Activated CD8-positive, alpha-beta T cell treated with anti-CD3 and anti-CD28 coated beads, Interleukin-2, amount 10 ng/mL, durations not matched to agents 7 days and 5 days (primary cell): ENCODE measurements at regions of chr6 and their contacts with region 1.

Region 1: DNA sequence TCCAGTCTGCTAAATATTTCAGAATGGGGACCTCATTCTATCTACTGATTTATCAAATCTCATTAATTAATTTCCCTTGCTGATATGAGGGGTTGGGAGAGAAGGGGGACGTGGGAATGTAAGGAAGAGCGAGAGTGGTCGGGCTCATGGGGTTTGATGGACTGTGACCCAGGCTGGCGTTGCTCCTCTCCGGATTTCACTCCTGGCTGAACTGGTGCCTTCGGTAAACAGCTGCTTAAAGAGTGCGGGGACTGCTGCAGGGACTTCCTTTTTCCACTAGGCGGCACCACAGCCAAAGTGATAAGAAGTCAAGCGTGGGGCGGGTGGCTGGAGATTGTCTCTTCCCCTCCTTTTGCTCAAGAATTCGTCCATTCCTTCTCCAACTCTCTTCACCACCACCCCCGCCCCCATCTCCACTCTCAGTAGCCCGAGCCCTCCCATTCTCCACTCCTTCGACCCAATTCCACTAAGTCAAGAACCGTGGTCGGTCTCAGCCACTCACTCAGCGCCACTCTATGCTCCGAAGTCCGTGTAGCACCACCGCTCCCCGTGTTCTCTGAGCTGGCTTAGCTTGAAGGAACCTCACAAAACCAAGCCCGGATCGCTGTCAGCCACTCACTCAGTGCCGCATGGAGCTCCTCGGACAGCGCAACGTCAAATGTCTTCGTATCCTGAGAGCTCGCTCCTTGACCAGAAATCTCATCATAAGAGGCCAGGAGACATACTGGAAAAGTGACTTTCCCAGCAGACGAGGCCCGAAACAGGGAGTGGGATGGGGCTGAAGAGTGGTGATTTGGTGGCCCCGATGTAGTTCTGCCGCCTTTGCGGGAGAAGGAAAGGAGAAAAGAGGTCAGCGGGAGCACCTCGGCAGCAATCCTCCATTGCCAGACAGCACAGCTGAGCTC is 9.7 kb downstream of the TRIM31 start:
- DNase-seq: peak; percentile 90
- ATAC-seq: peak; percentile 83
- H3K4me3 Mint-ChIP-seq: peak overlapping the region; percentile 79
- H3K27ac Mint-ChIP-seq: no peak overlapping the region
- H3K4me1 Mint-ChIP-seq: peaks cover 36% of the 10 kb centered on the region
- H3K27me3 Mint-ChIP-seq: peaks cover 62% of the 10 kb centered on the region

Region 2: DNA sequence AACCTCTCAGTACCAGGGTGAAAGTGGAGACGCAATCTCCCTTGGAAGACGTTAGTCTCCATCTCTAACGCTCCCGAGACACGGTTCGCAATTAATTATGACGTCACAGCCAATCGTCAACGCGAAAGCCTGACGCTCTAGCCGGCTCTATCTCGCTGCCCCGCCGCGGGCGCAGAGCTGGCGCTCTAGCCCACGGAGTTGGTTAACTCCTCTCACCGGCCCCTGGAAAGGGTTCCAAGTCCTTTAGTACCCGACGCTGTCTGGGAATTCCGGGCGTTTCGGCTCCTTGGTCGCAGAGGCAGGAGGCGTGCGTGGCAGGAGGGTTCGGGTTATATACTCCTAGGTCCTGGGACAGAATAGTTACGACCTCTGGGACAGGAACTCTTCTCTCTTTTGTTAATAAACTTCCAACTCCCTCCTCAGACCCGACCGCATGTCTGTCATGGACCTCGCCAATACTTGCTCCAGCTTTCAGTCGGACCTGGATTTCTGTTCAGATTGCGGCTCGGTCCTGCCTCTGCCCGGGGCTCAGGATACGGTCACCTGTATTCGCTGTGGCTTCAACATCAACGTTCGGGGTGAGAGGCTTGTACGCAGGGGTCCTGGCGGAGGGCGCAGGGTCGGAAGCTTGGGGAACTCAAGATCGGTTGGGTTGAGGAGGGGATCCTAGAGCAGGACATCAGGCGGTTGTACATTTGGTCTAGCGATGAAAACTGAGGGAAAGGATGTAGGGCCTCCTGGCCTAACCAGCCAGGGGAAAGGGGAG is 41.9 kb before region 1 on chr6 and contains the start of gene POLR1H:
- CTCF ChIA-PET with region 1: interaction called, 19 read pairs
- POLR2A ChIA-PET with region 1: interaction called, 7 read pairs
- DNase-seq: peak; percentile 93
- ATAC-seq: peak; percentile 93
- H3K4me3 Mint-ChIP-seq: peak within 1 kb of the TSS; percentile 98
- H3K27ac Mint-ChIP-seq: peak within 1 kb of the TSS; percentile 99
- H3K4me1 Mint-ChIP-seq: peaks cover 48% of the 10 kb centered on the region
- H3K27me3 Mint-ChIP-seq: no peaks in the 10 kb centered on the region
- total RNA-seq, gene POLR1H: 52.3 to 60.4 TPM

Region 3: GRCh38 chr6:30075161-30075986 is 27.8 kb before region 1 on chr6 and contains the start of gene RNF39:
- CTCF ChIA-PET with region 1: interaction called, 12 read pairs
- POLR2A ChIA-PET with region 1: no interaction called
- DNase-seq: peak; percentile 32
- ATAC-seq: no peak
- H3K4me3 Mint-ChIP-seq: peak within 1 kb of the TSS; percentile 43
- H3K27ac Mint-ChIP-seq: no peak within 1 kb of the TSS
- H3K4me1 Mint-ChIP-seq: peaks cover 50% of the 10 kb centered on the region
- H3K27me3 Mint-ChIP-seq: peaks cover 78% of the 10 kb centered on the region
- total RNA-seq, gene RNF39: not detected

Region 4: DNA sequence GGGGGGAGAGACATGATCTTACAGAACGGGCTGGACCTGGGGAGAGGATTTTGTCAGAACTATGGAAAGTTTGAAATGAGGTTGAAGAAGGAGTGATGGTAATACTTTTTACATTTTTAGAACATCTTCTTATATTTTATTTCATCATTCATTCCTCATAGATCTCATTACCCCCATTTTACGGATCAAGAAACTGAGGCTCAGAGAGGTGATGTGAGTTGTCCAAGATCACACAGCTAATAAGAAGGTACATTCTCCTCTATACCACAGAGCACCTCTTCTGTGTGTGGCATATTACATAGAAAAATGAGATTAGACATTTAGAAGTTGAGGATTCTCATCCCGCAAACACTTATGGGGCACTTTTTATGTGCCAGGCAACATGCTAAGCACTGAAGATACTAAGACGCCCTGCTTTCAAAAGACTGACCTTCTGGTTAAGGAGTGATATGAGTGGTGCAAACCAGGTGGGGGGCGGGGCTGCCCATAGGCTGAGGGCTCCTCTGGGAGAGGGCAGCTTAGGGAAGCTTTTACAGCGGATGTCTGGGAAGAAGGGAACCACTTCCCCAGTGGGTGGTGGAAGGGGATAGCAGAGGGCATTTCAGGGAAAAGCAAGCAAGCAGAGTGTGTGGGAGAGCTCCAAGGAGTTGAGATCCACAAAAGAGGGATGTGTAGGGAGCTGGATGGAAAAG is 10.2 kb before region 1 on chr6:
- CTCF ChIA-PET with region 1: interaction called, 19 read pairs
- POLR2A ChIA-PET with region 1: interaction called, 8 read pairs
- DNase-seq: no peak
- ATAC-seq: no peak
- H3K4me3 Mint-ChIP-seq: no peak overlapping the region
- H3K27ac Mint-ChIP-seq: no peak overlapping the region
- H3K4me1 Mint-ChIP-seq: peaks cover 7% of the 10 kb centered on the region
- H3K27me3 Mint-ChIP-seq: peaks cover 69% of the 10 kb centered on the region

Region 5: GRCh38 chr6:30130887-30131862 is 28.0 kb after region 1 on chr6:
- CTCF ChIA-PET with region 1: interaction called, 248 read pairs
- POLR2A ChIA-PET with region 1: interaction called, 4 read pairs
- DNase-seq: peak; percentile 81
- ATAC-seq: peak; percentile 94
- H3K4me3 Mint-ChIP-seq: no peak overlapping the region
- H3K27ac Mint-ChIP-seq: no peak overlapping the region
- H3K4me1 Mint-ChIP-seq: peaks cover 15% of the 10 kb centered on the region
- H3K27me3 Mint-ChIP-seq: peaks cover 66% of the 10 kb centered on the region

Region 6: DNA sequence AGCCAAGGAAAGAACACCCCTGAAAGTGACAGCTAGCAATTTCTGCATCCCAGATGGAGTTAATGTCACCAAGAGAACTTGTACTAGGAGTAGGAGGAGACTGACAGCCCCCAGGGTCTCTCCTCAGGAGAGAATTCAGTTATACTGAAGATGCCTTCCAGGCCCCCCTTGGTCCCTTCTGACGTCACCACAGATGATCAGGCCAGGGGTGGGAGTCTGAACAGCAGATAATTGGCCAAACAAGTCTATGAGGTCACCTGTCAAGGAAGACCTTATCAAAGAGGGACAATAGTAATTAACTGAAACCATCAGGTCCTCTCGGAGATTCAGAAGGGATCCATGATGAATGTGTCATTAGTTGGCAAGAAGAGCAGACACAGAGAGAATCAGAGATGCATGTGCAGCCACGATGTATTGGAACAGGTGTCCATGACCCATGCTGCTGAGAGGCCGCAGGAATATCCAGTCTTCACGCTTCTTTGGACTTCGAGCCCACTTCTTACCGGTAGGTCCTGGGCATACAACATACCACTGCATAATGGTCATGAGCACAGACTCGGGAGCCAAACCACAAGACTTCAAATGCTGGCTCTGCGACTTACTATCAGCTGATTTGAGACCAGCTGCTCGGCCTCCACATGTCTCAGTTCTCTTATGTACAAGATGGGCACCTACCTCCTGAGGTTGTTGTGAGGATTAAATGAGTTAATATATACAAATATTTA is 47.6 kb after region 1 on chr6:
- CTCF ChIA-PET with region 1: interaction called, 12 read pairs
- POLR2A ChIA-PET with region 1: no interaction called
- DNase-seq: no peak
- ATAC-seq: no peak
- H3K4me3 Mint-ChIP-seq: no peak overlapping the region
- H3K27ac Mint-ChIP-seq: no peak overlapping the region
- H3K4me1 Mint-ChIP-seq: peaks cover 17% of the 10 kb centered on the region
- H3K27me3 Mint-ChIP-seq: peaks cover 24% of the 10 kb centered on the region

Region 7: GRCh38 chr6:30212865-30213666 is 109.8 kb after region 1 on chr6 and contains the start of gene TRIM26:
- CTCF ChIA-PET with region 1: interaction called, 8 read pairs
- POLR2A ChIA-PET with region 1: interaction called, 10 read pairs
- DNase-seq: peak; percentile 98
- ATAC-seq: peak; percentile 90
- H3K4me3 Mint-ChIP-seq: peak within 1 kb of the TSS; percentile 90
- H3K27ac Mint-ChIP-seq: peak within 1 kb of the TSS; percentile 99
- H3K4me1 Mint-ChIP-seq: peaks cover 49% of the 10 kb centered on the region
- H3K27me3 Mint-ChIP-seq: peaks cover 3% of the 10 kb centered on the region
- total RNA-seq, gene TRIM26: 78.0 to 86.4 TPM

Region 8: DNA sequence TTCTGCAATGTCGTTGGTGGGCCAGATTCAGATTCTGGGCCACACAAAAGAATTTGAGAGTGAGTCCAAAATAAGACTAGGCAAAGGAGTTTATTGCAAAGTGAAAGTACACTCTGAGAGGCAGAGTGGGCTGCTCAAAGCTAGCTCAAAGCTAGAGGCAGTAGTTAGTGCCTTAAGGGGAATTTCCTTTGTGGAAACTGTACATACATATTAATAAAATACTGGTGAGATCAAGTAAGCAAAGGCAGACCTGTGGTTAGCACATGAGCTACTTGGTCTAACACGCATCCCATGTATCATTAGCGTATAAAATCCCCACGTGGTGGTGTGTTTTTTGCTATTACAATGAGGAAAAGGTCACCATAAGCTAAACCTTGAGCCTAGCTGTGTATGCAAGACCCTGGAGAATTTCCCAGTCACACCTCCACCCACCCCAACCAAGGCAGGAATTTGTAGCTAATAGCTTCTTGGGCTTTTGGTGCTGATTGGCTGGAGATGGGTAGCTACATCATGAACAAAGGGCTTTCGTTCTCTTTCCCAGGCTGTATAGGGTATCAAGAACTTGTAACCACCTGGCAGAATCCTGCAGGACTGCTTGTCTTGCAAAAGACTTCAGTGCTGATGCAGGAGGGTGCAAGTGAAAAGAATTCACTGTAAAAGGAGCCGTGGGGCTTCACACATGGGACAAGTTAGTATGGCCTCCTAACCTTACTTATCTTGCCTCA is 124.7 kb after region 1 on chr6:
- CTCF ChIA-PET with region 1: no interaction called
- POLR2A ChIA-PET with region 1: no interaction called
- DNase-seq: no peak
- ATAC-seq: no peak
- H3K4me3 Mint-ChIP-seq: no peak overlapping the region
- H3K27ac Mint-ChIP-seq: no peak overlapping the region
- H3K4me1 Mint-ChIP-seq: peaks cover 6% of the 10 kb centered on the region
- H3K27me3 Mint-ChIP-seq: peaks cover 17% of the 10 kb centered on the region